HepG2 (cell line): ENCODE measurements at regions of chr14 and their contacts with region 1.

Region 1: GRCh38 chr14:61269321-61270083 is 11.6 kb downstream of the TMEM30B start:
- DNase-seq: peak; percentile 75
- ATAC-seq: peak; percentile 89
- H3K4me3 ChIP-seq: peak overlapping the region in 2 of 3 experiments; percentile 7 to 67; a peak in 4 of 6 replicates
- H3K27ac ChIP-seq: no peak overlapping the region
- H3K4me1 ChIP-seq: peaks cover 14% of the 10 kb centered on the region; the same call in 1 of the 2 replicates
- H3K27me3 ChIP-seq: no peaks in the 10 kb centered on the region; a peak in 1 of 5 replicates
- CTCF ChIP-seq: peak; percentile 88
- EP300 ChIP-seq: 0 out of 4 replicates have a peak, but pooled peaks of 1 of the 2 experiments have one; percentile 5
- POLR2A ChIP-seq: no peak
- RAD21 ChIP-seq: peak; percentile 70

Region 2: DNA sequence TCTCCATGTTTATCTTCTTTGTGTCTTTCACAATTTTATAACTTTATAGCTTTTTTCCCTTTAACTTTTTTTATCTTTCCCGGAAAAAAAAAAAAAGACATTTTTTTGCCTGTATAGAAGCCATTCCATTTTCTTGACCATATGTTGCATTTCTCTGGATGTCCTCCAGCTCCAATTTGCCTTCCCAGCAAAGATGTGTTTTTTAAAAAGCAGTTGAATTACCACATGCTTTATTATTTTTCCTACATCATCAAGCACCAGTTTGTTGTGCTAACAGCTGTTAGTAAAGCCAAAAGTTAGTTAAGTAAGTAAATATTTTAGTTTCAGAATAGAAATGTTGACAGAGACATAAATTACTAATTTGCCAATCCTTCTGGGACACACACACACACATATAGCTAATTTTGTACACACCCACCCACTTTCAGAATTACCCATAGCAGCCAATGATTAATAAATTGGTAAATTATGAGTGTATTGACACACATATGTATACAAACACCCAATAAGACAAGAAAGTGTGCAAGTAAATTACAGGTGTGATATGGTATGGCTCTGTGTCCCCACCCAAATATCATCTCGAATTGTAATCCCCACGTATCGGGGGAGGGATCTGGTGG is 170.2 kb before region 1 on chr14:
- CTCF ChIA-PET with region 1: no interaction called
- POLR2A ChIA-PET with region 1: no interaction called
- in situ Hi-C with region 1: no loop called
- intact Hi-C with region 1: no loop called
- DNase-seq: no peak
- ATAC-seq: no peak
- H3K4me3 ChIP-seq: no peak overlapping the region
- H3K27ac ChIP-seq: no peak overlapping the region
- H3K4me1 ChIP-seq: peaks cover 30% of the 10 kb centered on the region
- H3K27me3 ChIP-seq: no peaks in the 10 kb centered on the region
- CTCF ChIP-seq: no peak
- EP300 ChIP-seq: no peak
- POLR2A ChIP-seq: no peak
- RAD21 ChIP-seq: no peak

Region 3: GRCh38 chr14:61281186-61281947 is 11.9 kb after region 1 on chr14 and contains the start of gene TMEM30B:
- CTCF ChIA-PET with region 1: interaction called, 26 read pairs
- POLR2A ChIA-PET with region 1: no interaction called
- in situ Hi-C with region 1: no loop called
- intact Hi-C with region 1: loop called (anchors 1 kb)
- DNase-seq: no peak
- ATAC-seq: no peak
- H3K4me3 ChIP-seq: no peak within 1 kb of the TSS
- H3K27ac ChIP-seq: no peak within 1 kb of the TSS
- H3K4me1 ChIP-seq: peaks cover 38% of the 10 kb centered on the region
- H3K27me3 ChIP-seq: no peaks in the 10 kb centered on the region; a peak in 1 of 5 replicates
- CTCF ChIP-seq: no peak
- EP300 ChIP-seq: no peak
- POLR2A ChIP-seq: no peak
- RAD21 ChIP-seq: no peak
- total RNA-seq, gene TMEM30B: not detected in 2 replicates

Region 4: GRCh38 chr14:61388173-61388975 is 118.9 kb after region 1 on chr14:
- CTCF ChIA-PET with region 1: no interaction called
- POLR2A ChIA-PET with region 1: no interaction called
- in situ Hi-C with region 1: no loop called
- intact Hi-C with region 1: no loop called
- DNase-seq: no peak
- ATAC-seq: no peak
- H3K4me3 ChIP-seq: no peak overlapping the region
- H3K27ac ChIP-seq: no peak overlapping the region
- H3K4me1 ChIP-seq: no peaks in the 10 kb centered on the region
- H3K27me3 ChIP-seq: peaks cover 3 to 28% of the 10 kb centered on the region in 2 experiments; a peak in 4 of 5 replicates
- CTCF ChIP-seq: no peak
- EP300 ChIP-seq: no peak
- POLR2A ChIP-seq: no peak
- RAD21 ChIP-seq: no peak

Region 5: DNA sequence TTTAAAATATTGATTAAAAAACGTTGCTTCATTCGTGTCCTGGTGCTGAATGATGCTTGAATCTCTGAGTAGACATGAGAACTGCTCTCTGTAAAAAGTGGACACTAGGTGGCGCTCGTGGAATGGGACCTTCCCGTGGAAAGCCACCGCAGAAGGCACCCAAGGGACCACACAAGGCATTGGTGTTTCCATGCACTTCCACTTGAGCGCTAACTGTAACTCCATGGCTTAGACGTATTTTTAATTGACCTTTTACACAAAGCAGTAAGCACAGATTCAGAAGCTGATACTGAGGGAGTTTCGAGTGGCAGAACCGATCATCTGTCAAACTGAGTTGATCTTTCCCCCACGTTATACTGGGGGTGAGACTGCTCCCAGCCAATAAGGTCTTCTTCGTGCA is 187.2 kb after region 1 on chr14:
- CTCF ChIA-PET with region 1: no interaction called
- POLR2A ChIA-PET with region 1: no interaction called
- in situ Hi-C with region 1: no loop called
- intact Hi-C with region 1: no loop called
- DNase-seq: peak; percentile 60
- ATAC-seq: peak; percentile 92
- H3K4me3 ChIP-seq: no peak overlapping the region
- H3K27ac ChIP-seq: no peak overlapping the region
- H3K4me1 ChIP-seq: peaks cover 8% of the 10 kb centered on the region
- H3K27me3 ChIP-seq: no peaks in the 10 kb centered on the region; a peak in 2 of 5 replicates
- CTCF ChIP-seq: peak; percentile 86
- EP300 ChIP-seq: no peak
- POLR2A ChIP-seq: no peak
- RAD21 ChIP-seq: peak; percentile 83

Region 6: GRCh38 chr14:61525293-61526011 is 255.9 kb after region 1 on chr14:
- CTCF ChIA-PET with region 1: no interaction called
- POLR2A ChIA-PET with region 1: no interaction called
- in situ Hi-C with region 1: no loop called
- intact Hi-C with region 1: no loop called
- DNase-seq: no peak
- ATAC-seq: peak; percentile 6; the same call in 1 of the 3 replicates
- H3K4me3 ChIP-seq: no peak overlapping the region
- H3K27ac ChIP-seq: peak overlapping the region; percentile 4
- H3K4me1 ChIP-seq: peaks cover 64% of the 10 kb centered on the region
- H3K27me3 ChIP-seq: no peaks in the 10 kb centered on the region
- CTCF ChIP-seq: no peak
- EP300 ChIP-seq: no peak
- POLR2A ChIP-seq: no peak
- RAD21 ChIP-seq: no peak